Natural killer cell (primary cell): ENCODE measurements at regions of chr11 and their contacts with region 1.

Region 1: DNA sequence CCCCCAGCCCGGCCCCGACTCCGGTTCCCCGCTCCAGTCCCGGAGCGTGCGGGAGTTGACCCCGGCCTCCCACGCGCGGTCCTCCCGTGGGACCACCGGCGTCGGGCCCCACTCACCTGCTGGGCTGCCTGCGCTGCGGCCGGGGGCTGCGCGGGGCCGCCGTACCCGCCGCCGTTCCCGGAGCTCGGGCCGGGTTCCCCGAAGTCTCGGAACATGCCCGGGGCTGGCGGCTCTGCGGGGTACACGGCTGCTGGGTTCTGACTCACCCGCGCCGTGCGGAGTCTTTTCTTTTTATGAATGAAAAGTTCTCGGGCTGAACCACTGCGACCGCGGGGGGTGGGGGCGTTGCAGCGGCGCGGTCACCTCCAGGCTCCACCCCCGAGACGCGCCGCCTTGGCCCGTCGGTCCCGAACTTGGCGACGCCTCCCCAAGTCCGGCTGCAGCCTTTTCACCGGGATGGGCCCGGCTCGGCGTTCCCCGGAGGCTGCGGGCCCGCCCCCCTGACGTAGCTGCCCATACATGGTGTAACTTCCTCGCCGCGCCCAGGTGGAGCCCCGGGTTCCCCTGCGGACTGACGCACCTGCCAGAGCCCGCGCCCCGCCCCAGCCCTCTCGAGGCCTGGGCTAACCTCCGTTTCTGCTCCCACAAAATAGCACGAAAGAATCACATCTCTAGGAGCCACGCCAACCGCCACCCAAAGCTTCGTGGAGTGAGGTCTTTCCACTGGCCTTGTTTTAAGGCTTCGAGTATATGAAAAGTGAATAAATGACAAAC is at the start of gene FOSL1:
- DNase-seq: peak; percentile 91 to 96
- ATAC-seq: peak; percentile 66 to 86 (median 78)
- H3K4me3 ChIP-seq: peak within 1 kb of the TSS; percentile 30
- H3K4me3 Mint-ChIP-seq: peak within 1 kb of the TSS; percentile 72
- H3K27ac ChIP-seq: peak within 1 kb of the TSS; percentile 15
- H3K27ac Mint-ChIP-seq: peak within 1 kb of the TSS; percentile 90 to 98
- H3K4me1 ChIP-seq: peaks cover 38% of the 10 kb centered on the region
- H3K4me1 Mint-ChIP-seq: peaks cover 12 to 23% of the 10 kb centered on the region in 2 donors
- H3K27me3 ChIP-seq: peaks cover 5% of the 10 kb centered on the region
- H3K27me3 Mint-ChIP-seq: peaks cover 0 to 5% of the 10 kb centered on the region in 2 donors
- CTCF ChIP-seq: no peak
- total RNA-seq, gene FOSL1: 3.4 to 9.0 (median 6.8) TPM

Region 2: GRCh38 chr11:65919146-65920033 is 19.1 kb after region 1 on chr11 and contains the start of gene DRAP1:
- intact Hi-C with region 1: loop called (anchors 2 kb)
- DNase-seq: peak; percentile 97 to 98
- ATAC-seq: peak; percentile 88 to 97 (median 90)
- H3K4me3 ChIP-seq: peak within 1 kb of the TSS; percentile 96
- H3K4me3 Mint-ChIP-seq: peak within 1 kb of the TSS; percentile 90
- H3K27ac ChIP-seq: peak within 1 kb of the TSS; percentile 79
- H3K27ac Mint-ChIP-seq: peak within 1 kb of the TSS; percentile 77 to 90
- H3K4me1 ChIP-seq: peaks cover 57% of the 10 kb centered on the region
- H3K4me1 Mint-ChIP-seq: peaks cover 24 to 52% of the 10 kb centered on the region in 2 donors
- H3K27me3 ChIP-seq: no peaks in the 10 kb centered on the region
- H3K27me3 Mint-ChIP-seq: no peaks in the 10 kb centered on the region
- CTCF ChIP-seq: no peak
- total RNA-seq, gene DRAP1: 114 to 115 (median 115) TPM